CD8-positive, alpha-beta memory T cell (primary cell): ENCODE measurements at regions of chr21 and their contacts with region 1.

Region 1: GRCh38 chr21:43893536-43894205 is 28.6 kb downstream of the AGPAT3 start:
- DNase-seq: no peak
- H3K4me3 ChIP-seq: peak overlapping the region; percentile 6
- H3K4me3 Mint-ChIP-seq: peak overlapping the region; percentile 31 to 88 (median 74)
- H3K27ac ChIP-seq: peak overlapping the region; percentile 43
- H3K27ac Mint-ChIP-seq: peak overlapping the region; percentile 37 to 91 (median 80)
- H3K4me1 ChIP-seq: peaks cover 26% of the 10 kb centered on the region
- H3K4me1 Mint-ChIP-seq: peaks cover 40 to 61% (median 58%) of the 10 kb centered on the region in 3 donors
- H3K27me3 ChIP-seq: no peaks in the 10 kb centered on the region
- H3K27me3 Mint-ChIP-seq: no peaks in the 10 kb centered on the region

Region 2: DNA sequence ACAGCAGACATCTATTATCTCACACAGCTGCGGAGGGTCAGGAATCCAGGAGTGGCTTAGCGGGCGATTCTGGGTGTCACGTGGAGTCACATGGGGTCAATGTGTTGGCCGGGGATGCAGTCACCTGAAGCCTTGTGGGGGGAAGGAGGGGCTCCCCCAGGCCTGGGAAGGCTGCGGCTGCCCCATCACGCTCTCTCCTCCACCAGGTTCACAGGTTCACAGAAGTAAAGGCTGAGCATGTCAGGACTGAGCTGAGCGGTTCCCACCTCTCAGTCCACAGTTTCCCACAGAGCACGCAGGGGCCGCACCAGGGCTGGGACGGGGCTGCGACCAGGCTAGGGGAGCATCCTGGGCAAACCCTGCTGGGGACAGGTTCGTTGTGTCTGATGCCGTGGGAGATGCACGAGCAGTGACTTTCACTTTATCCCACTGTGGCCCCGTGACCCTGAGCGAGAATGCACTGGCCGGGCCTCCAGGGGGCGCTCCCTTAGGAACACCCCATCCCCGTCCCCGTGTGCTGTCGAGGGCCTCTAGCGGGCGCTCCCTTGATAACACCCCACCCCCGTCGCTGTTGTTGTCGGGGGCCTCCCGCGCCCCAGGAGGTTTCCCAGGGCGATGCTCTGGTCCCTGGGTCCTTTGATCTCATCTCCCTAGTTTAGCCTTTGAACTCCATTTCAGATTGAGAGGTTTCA is 45.2 kb after region 1 on chr21:
- CTCF ChIA-PET with region 1: interaction called, 14 read pairs
- POLR2A ChIA-PET with region 1: no interaction called
- DNase-seq: peak; percentile 81 to 91 (median 86)
- H3K4me3 ChIP-seq: peak overlapping the region; percentile 83
- H3K4me3 Mint-ChIP-seq: peak overlapping the region; percentile 83 to 94 (median 89)
- H3K27ac ChIP-seq: peak overlapping the region; percentile 45
- H3K27ac Mint-ChIP-seq: peak overlapping the region; percentile 78 to 92 (median 82)
- H3K4me1 ChIP-seq: peaks cover 14% of the 10 kb centered on the region
- H3K4me1 Mint-ChIP-seq: peaks cover 12 to 29% (median 20%) of the 10 kb centered on the region in 3 donors
- H3K27me3 ChIP-seq: no peaks in the 10 kb centered on the region
- H3K27me3 Mint-ChIP-seq: no peaks in the 10 kb centered on the region